ENCODE measurements at regions of chr1 and their contacts with region 1.

Region 1: DNA sequence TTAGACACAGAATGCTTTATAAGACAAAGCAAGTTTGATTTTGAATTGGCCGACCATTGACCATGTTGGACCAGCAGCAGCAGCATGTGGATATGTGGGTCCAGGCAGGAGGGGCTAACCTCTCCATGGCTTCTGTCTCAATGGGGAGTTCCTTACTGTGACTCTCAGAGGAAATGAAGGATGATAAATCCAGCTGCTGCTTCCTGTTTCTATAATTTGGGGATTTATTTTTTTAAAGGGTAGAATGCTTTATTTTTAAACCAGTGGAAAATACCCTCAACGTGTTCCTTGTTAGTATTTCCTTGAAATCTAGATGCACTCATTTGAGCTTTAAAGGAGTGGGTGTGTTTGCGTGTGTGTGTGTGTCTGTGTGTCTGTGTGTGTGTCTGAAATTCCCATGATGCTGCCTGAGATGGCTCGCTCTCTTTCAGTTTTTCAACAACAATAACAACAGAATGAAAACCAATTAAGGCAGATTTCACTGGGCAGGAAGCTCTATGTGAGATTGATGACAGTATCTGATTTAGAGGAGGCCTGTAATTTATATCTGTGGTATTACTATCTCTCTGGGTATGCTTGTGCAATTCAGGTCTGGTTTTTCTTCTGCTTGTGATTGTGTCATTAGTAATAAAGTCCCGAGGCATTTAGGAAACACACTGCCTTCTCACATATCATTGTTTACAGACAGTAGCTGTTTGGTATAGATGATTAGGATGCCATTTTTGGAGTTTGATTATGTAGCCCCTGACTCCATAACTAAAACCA is 86.1 kb upstream of the ZNF326 start:
- DNase-seq: peak in 2 of 14 experiments; percentile 43 to 60
- ATAC-seq: no peak
- H3K4me3 ChIP-seq: no peak overlapping the region
- H3K4me3 Mint-ChIP-seq: no peak overlapping the region
- H3K27ac ChIP-seq: no peak overlapping the region
- H3K27ac Mint-ChIP-seq: peak overlapping the region; percentile 48
- H3K4me1 ChIP-seq: peaks cover 9% of the 10 kb centered on the region
- H3K4me1 Mint-ChIP-seq: peaks cover 75% of the 10 kb centered on the region
- H3K27me3 ChIP-seq: no peaks in the 10 kb centered on the region
- H3K27me3 Mint-ChIP-seq: no peaks in the 10 kb centered on the region
- CTCF ChIP-seq: no peak

Region 2: GRCh38 chr1:89953072-89953626 is 44.3 kb after region 1 on chr1:
- CTCF ChIA-PET with region 1: no interaction called
- POLR2A ChIA-PET with region 1: no interaction called
- intact Hi-C with region 1: loop called in 1 of 2 experiments (anchors 5 kb)
- DNase-seq: peak in 13 of 14 experiments; percentile 3 to 59 (median 20)
- ATAC-seq: peak; percentile 38
- H3K4me3 ChIP-seq: no peak overlapping the region
- H3K4me3 Mint-ChIP-seq: no peak overlapping the region
- H3K27ac ChIP-seq: no peak overlapping the region
- H3K27ac Mint-ChIP-seq: no peak overlapping the region
- H3K4me1 ChIP-seq: peaks cover 11% of the 10 kb centered on the region
- H3K4me1 Mint-ChIP-seq: peaks cover 23% of the 10 kb centered on the region
- H3K27me3 ChIP-seq: no peaks in the 10 kb centered on the region
- H3K27me3 Mint-ChIP-seq: no peaks in the 10 kb centered on the region
- CTCF ChIP-seq: peak; percentile 41